Breast epithelium (tissue), 4 donors: ENCODE measurements at regions of chr17 and their contacts with region 1.

Region 1: GRCh38 chr17:66829883-66830282 is 5.0 kb upstream of the CACNG5 start:
- DNase-seq: no peak
- H3K4me3 ChIP-seq: no peak overlapping the region
- H3K27ac ChIP-seq: no peak overlapping the region
- H3K4me1 ChIP-seq: no peaks in the 10 kb centered on the region
- H3K27me3 ChIP-seq: peaks cover 0 to 48% of the 10 kb centered on the region in 2 donors
- CTCF ChIP-seq: no peak
- POLR2A ChIP-seq: no peak

Region 2: GRCh38 chr17:66755101-66755904 is 74.6 kb before region 1 on chr17:
- intact Hi-C with region 1: loop called (anchors 2 kb)
- DNase-seq: no peak
- H3K4me3 ChIP-seq: no peak overlapping the region
- H3K27ac ChIP-seq: no peak overlapping the region
- H3K4me1 ChIP-seq: no peaks in the 10 kb centered on the region
- H3K27me3 ChIP-seq: no peaks in the 10 kb centered on the region
- CTCF ChIP-seq: no peak
- POLR2A ChIP-seq: no peak